ENCODE measurements at regions of chr1 and their contacts with region 1.

Region 1: DNA sequence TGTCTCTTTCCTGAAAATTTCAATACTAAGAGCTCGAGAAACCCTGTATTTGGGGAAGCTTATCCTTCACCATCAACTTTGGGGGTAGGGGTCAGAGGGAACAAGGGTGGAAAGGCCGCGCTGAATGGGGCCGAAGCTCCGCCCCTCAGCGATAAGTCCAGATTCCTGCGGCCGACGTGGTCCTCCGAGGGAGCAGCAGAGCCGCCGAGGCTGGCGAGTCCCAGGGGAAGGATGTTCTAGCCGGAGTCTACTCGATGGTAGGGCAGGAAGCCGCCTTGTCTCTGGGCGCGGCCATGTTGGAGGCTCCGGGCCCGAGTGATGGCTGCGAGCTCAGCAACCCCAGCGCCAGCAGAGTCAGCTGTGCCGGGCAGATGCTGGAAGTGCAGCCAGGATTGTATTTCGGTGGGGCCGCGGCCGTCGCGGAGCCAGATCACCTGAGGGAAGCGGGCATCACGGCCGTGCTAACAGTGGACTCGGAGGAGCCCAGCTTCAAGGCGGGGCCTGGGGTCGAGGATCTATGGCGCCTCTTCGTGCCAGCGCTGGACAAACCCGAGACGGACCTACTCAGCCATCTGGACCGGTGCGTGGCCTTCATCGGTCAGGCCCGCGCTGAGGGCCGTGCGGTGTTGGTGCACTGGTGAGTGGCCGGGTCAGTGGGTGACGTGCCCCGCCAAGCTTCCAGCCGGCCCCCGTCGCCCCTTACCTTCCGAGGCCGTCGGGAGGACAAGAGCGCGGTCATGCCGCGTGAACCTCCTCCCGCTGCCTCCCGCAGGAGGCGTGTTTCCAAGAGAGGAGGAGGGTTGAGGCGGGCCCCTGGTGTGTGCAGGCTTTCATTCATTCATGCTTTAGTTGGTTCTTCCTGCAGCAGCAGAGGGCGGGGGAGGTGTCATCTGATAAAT is at the start of gene DUSP12:
- DNase-seq: no peak
- ATAC-seq: peak; percentile 97
- H3K4me3 ChIP-seq: peak within 1 kb of the TSS; percentile 87
- H3K27ac ChIP-seq: peak within 1 kb of the TSS; percentile 72
- H3K4me1 ChIP-seq: peaks cover 25% of the 10 kb centered on the region
- H3K27me3 ChIP-seq: no peaks in the 10 kb centered on the region
- CTCF ChIP-seq: peak; percentile 26 to 70 (median 33); a peak in 4 of 6 replicates
- EP300 ChIP-seq: no peak
- POLR2A ChIP-seq: peak; percentile 96
- RAD21 ChIP-seq: no peak
- polyA plus RNA-seq, gene DUSP12: 7.0 to 13.3 TPM

Region 2: GRCh38 chr1:161192476-161193465 is 557.0 kb before region 1 on chr1:
- CTCF ChIA-PET with region 1: no interaction called
- POLR2A ChIA-PET with region 1: no interaction called
- RAD21 ChIA-PET with region 1: no interaction called
- SMC1A ChIA-PET with region 1: no interaction called
- in situ Hi-C with region 1: loop called (anchors 10 kb)
- intact Hi-C with region 1: no loop called
- DNase-seq: no peak
- ATAC-seq: peak; percentile 94
- H3K4me3 ChIP-seq: no peak overlapping the region
- H3K27ac ChIP-seq: no peak overlapping the region
- H3K4me1 ChIP-seq: peaks cover 19% of the 10 kb centered on the region
- H3K27me3 ChIP-seq: no peaks in the 10 kb centered on the region
- CTCF ChIP-seq: peak; percentile 89 to 95 (median 89)
- EP300 ChIP-seq: no peak
- POLR2A ChIP-seq: no peak
- RAD21 ChIP-seq: peak; percentile 84

Region 3: GRCh38 chr1:161399257-161399998 is 350.3 kb before region 1 on chr1:
- CTCF ChIA-PET with region 1: no interaction called
- POLR2A ChIA-PET with region 1: no interaction called
- RAD21 ChIA-PET with region 1: interaction called, 3 read pairs
- SMC1A ChIA-PET with region 1: no interaction called
- in situ Hi-C with region 1: no loop called
- intact Hi-C with region 1: loop called (anchors 10 kb)
- DNase-seq: peak; percentile 80
- ATAC-seq: peak; percentile 89
- H3K4me3 ChIP-seq: peak overlapping the region; percentile 87
- H3K27ac ChIP-seq: peak overlapping the region; percentile 97
- H3K4me1 ChIP-seq: 0 out of 2 replicates have a peak, but pooled peaks cover 3% of the 10 kb centered on the region
- H3K27me3 ChIP-seq: no peaks in the 10 kb centered on the region
- CTCF ChIP-seq: peak; percentile 30 to 72 (median 66)
- EP300 ChIP-seq: peak in 1 of 2 experiments; percentile 78; a peak in 1 of 4 replicates
- POLR2A ChIP-seq: peak; percentile 90
- RAD21 ChIP-seq: no peak

Region 4: GRCh38 chr1:161486806-161487741 is 262.7 kb before region 1 on chr1:
- CTCF ChIA-PET with region 1: interaction called, 262 read pairs
- POLR2A ChIA-PET with region 1: no interaction called
- RAD21 ChIA-PET with region 1: interaction called, 3 read pairs
- SMC1A ChIA-PET with region 1: no interaction called
- in situ Hi-C with region 1: loop called (anchors 10 kb)
- intact Hi-C with region 1: no loop called
- DNase-seq: peak; percentile 23
- ATAC-seq: peak; percentile 88
- H3K4me3 ChIP-seq: no peak overlapping the region
- H3K27ac ChIP-seq: no peak overlapping the region
- H3K4me1 ChIP-seq: no peaks in the 10 kb centered on the region
- H3K27me3 ChIP-seq: no peaks in the 10 kb centered on the region
- CTCF ChIP-seq: peak; percentile 66 to 76 (median 76)
- EP300 ChIP-seq: no peak
- POLR2A ChIP-seq: no peak
- RAD21 ChIP-seq: peak; percentile 86

Region 5: GRCh38 chr1:161549652-161550051 is 200.1 kb before region 1 on chr1 and contains the start of gene FCGR3A:
- CTCF ChIA-PET with region 1: no interaction called
- POLR2A ChIA-PET with region 1: no interaction called
- RAD21 ChIA-PET with region 1: no interaction called
- SMC1A ChIA-PET with region 1: no interaction called
- in situ Hi-C with region 1: no loop called
- intact Hi-C with region 1: loop called (anchors 10 kb)
- DNase-seq: no peak
- ATAC-seq: no peak
- H3K4me3 ChIP-seq: no peak within 1 kb of the TSS
- H3K27ac ChIP-seq: no peak within 1 kb of the TSS
- H3K4me1 ChIP-seq: no peaks in the 10 kb centered on the region
- H3K27me3 ChIP-seq: no peaks in the 10 kb centered on the region
- CTCF ChIP-seq: no peak
- EP300 ChIP-seq: no peak
- POLR2A ChIP-seq: no peak
- RAD21 ChIP-seq: no peak
- polyA plus RNA-seq, gene FCGR3A: not detected

Region 6: DNA sequence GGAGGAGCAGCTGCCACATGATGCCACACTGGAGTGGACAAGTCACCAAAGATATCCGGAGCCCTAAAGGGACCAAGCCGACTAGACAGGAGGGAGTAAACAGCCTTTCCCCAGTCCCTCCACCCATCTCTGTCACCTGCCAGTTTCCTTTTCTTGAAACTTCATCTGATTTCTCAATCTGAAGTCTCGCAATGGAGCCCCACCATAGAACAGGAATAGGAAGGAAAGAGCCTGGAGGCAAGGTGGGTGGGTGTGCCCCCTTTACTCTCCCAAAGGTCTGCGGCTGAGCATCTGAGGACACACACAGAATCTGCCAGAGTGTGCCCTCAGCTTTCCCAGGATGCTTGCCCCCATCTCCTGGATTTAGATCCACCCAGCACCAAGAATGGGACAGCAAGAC is 118.7 kb before region 1 on chr1 and contains the start of gene FCGR3B:
- CTCF ChIA-PET with region 1: no interaction called
- POLR2A ChIA-PET with region 1: no interaction called
- RAD21 ChIA-PET with region 1: no interaction called
- SMC1A ChIA-PET with region 1: no interaction called
- in situ Hi-C with region 1: no loop called
- intact Hi-C with region 1: no loop called
- DNase-seq: no peak
- ATAC-seq: no peak
- H3K4me3 ChIP-seq: no peak within 1 kb of the TSS
- H3K27ac ChIP-seq: no peak within 1 kb of the TSS
- H3K4me1 ChIP-seq: no peaks in the 10 kb centered on the region
- H3K27me3 ChIP-seq: no peaks in the 10 kb centered on the region
- CTCF ChIP-seq: no peak
- EP300 ChIP-seq: no peak
- POLR2A ChIP-seq: no peak
- RAD21 ChIP-seq: no peak
- polyA plus RNA-seq, gene FCGR3B: not detected

Region 7: GRCh38 chr1:161766102-161766981 is 16.6 kb after region 1 on chr1 and contains the start of gene ATF6:
- CTCF ChIA-PET with region 1: interaction called, 7 read pairs
- POLR2A ChIA-PET with region 1: interaction called, 8 read pairs
- RAD21 ChIA-PET with region 1: interaction called, 10 read pairs
- SMC1A ChIA-PET with region 1: interaction called, 7 read pairs
- in situ Hi-C with region 1: no loop called
- intact Hi-C with region 1: no loop called
- DNase-seq: peak; percentile 72
- ATAC-seq: peak; percentile 76
- H3K4me3 ChIP-seq: peak within 1 kb of the TSS; percentile 92
- H3K27ac ChIP-seq: peak within 1 kb of the TSS; percentile 93
- H3K4me1 ChIP-seq: peaks cover 13% of the 10 kb centered on the region
- H3K27me3 ChIP-seq: no peaks in the 10 kb centered on the region
- CTCF ChIP-seq: no peak
- EP300 ChIP-seq: peak in 1 of 2 experiments; percentile 21; a peak in 1 of 4 replicates
- POLR2A ChIP-seq: peak; percentile 70
- RAD21 ChIP-seq: no peak
- polyA plus RNA-seq, gene ATF6: 7.8 to 8.9 TPM